ENCODE measurements at regions of chr20 and their contacts with region 1.

Region 1: DNA sequence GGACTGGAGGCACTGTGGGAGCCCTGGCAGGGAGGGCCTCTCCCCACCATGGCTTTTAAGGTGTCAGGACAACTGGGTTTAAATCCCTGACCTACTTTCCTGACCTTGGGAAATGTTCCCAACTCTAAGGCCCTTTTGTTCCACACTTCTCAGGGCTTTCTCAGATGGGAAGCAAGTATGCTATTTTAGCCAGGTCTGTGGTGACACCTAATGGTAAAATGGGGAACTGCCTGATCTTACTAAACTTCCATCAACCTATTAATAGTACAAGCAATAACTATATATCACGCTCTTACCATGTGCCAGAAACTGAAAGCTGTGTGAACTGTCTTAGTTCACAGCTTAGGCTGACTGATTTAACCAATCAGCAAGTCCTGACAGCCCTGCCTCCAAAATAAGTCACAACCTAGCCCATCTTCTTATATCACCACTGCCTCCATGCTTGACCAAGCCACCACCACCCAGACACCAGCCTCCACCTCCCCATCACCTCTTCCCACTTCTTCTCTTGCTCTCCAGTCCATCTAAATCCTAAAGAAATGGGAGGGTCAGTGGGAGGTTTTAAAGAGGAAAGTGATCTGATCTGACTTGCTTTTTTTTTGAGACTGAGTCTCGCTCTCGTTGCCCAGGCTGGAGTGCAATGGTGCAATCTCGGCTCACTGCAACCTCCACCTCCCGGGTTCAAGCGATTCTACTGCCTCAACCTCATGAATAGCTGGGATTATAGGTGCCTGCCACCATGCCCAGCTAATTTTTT is 6.9 kb upstream of the BLCAP start:
- DNase-seq: peak; percentile 51 to 69 (median 67)
- H3K4me3 ChIP-seq: no peak overlapping the region
- H3K4me3 Mint-ChIP-seq: peak overlapping the region in 2 of 8 donors; percentile 28 to 46
- H3K27ac ChIP-seq: no peak overlapping the region
- H3K27ac Mint-ChIP-seq: peak overlapping the region in 2 of 7 donors; percentile 31 to 57
- H3K4me1 ChIP-seq: no peaks in the 10 kb centered on the region
- H3K4me1 Mint-ChIP-seq: peaks cover 0 to 5% (median 3%) of the 10 kb centered on the region in 4 donors
- H3K27me3 ChIP-seq: no peaks in the 10 kb centered on the region
- H3K27me3 Mint-ChIP-seq: peaks cover 5 to 12% of the 10 kb centered on the region in 2 donors

Region 2: DNA sequence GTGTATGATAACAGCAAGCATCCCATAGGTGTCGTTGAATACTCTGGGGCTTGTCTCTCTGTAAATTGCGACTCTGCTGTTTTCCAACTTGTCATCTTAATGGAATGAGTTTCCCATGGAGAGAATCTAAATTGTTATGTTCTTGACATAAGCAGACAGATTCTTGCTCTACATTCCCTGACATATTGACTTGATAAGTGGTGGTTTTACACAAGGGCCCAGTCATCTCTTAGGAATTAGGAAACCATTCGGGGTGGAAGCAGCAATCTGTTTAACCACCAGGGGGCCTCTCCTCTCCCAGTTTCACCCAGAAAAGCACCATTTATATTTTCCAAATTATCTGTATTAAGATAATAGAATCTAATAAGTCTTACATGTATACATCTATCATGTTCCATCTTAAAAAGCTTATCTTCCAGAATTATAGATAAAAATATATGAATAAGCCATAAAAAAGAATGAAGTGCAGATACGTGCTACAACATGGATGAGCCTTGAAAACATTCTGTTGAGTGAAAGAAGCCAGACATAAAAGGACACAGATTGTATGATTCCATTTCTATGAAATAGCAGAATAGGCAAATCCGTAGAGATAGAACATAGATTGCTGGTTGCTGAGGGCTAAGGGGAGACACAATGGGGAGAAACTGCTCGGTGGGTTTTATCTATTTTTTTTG is 332.2 kb before region 1 on chr20:
- CTCF ChIA-PET with region 1: interaction called, 180 read pairs
- POLR2A ChIA-PET with region 1: no interaction called
- intact Hi-C with region 1: loop called (anchors 1 kb)
- DNase-seq: peak in 2 of 5 donors; percentile 19 to 26
- H3K4me3 ChIP-seq: no peak overlapping the region
- H3K4me3 Mint-ChIP-seq: no peak overlapping the region
- H3K27ac ChIP-seq: no peak overlapping the region
- H3K27ac Mint-ChIP-seq: peak overlapping the region in 2 of 7 donors; percentile 9 to 64
- H3K4me1 ChIP-seq: no peaks in the 10 kb centered on the region
- H3K4me1 Mint-ChIP-seq: peaks cover 4 to 19% (median 8%) of the 10 kb centered on the region in 4 donors
- H3K27me3 ChIP-seq: no peaks in the 10 kb centered on the region
- H3K27me3 Mint-ChIP-seq: no peaks in the 10 kb centered on the region

Region 3: GRCh38 chr20:37270576-37271420 is 263.8 kb before region 1 on chr20:
- CTCF ChIA-PET with region 1: interaction called, 113 read pairs
- POLR2A ChIA-PET with region 1: no interaction called
- intact Hi-C with region 1: loop called (anchors 1 kb)
- DNase-seq: no peak
- H3K4me3 ChIP-seq: no peak overlapping the region
- H3K4me3 Mint-ChIP-seq: no peak overlapping the region
- H3K27ac ChIP-seq: no peak overlapping the region
- H3K27ac Mint-ChIP-seq: no peak overlapping the region
- H3K4me1 ChIP-seq: no peaks in the 10 kb centered on the region
- H3K4me1 Mint-ChIP-seq: no peaks in the 10 kb centered on the region
- H3K27me3 ChIP-seq: no peaks in the 10 kb centered on the region
- H3K27me3 Mint-ChIP-seq: no peaks in the 10 kb centered on the region

Region 4: GRCh38 chr20:37384683-37385174 is 149.8 kb before region 1 on chr20:
- CTCF ChIA-PET with region 1: interaction called, 7 read pairs
- POLR2A ChIA-PET with region 1: no interaction called
- intact Hi-C with region 1: loop called (anchors 1 kb)
- DNase-seq: peak; percentile 51 to 83 (median 75)
- H3K4me3 ChIP-seq: peak overlapping the region in 1 of 2 donors; percentile 45
- H3K4me3 Mint-ChIP-seq: peak overlapping the region; percentile 79 to 92 (median 88)
- H3K27ac ChIP-seq: no peak overlapping the region
- H3K27ac Mint-ChIP-seq: peak overlapping the region in 6 of 7 donors; percentile 77 to 91 (median 86)
- H3K4me1 ChIP-seq: peaks cover 4% of the 10 kb centered on the region
- H3K4me1 Mint-ChIP-seq: peaks cover 4 to 7% (median 6%) of the 10 kb centered on the region in 4 donors
- H3K27me3 ChIP-seq: no peaks in the 10 kb centered on the region
- H3K27me3 Mint-ChIP-seq: no peaks in the 10 kb centered on the region

Measured in CD4-positive, alpha-beta memory T cell (primary cell).